Activated T-helper 1 cell treated with anti-CD3 and anti-CD28 coated beads, Interleukin-12 subunit alpha, Interleukin-12 subunit beta, Interleukin-2, Interleukin-4 antibody, amounts not matched to agents 30 ng/mL and 10 ng/mL and 1 ng/mL, durations not matched to agents 14 hours and 24 hours and 36 hours (primary cell): ENCODE measurements at regions of chr7 and their contacts with region 1.

Region 1: DNA sequence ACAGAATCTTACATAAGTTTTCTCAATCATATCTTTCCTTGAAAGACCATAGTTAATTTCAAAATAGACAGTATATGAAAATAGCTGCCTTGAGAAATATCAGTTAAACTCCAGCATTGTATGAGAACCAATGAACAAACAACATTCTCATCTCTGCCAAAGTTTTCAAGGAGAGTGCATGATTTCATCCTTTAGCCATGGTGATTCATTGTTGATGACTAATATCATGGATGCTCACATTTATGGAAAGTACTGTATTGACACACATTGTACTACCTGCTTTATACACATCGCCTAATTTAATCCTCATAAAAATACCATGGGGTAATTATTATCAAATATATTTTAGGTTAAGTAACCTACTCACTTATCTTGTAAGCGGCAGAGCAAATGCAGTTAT is 250.3 kb downstream of the CNTNAP2 start:
- DNase-seq: no peak
- H3K4me3 Mint-ChIP-seq: no peak overlapping the region
- H3K27ac Mint-ChIP-seq: no peak overlapping the region
- H3K4me1 Mint-ChIP-seq: no peaks in the 10 kb centered on the region
- H3K27me3 Mint-ChIP-seq: no peaks in the 10 kb centered on the region

Region 2: GRCh38 chr7:145263886-145264285 is 1103.1 kb before region 1 on chr7:
- intact Hi-C with region 1: loop called (anchors 10 kb)
- DNase-seq: no peak
- H3K4me3 Mint-ChIP-seq: no peak overlapping the region
- H3K27ac Mint-ChIP-seq: no peak overlapping the region
- H3K4me1 Mint-ChIP-seq: no peaks in the 10 kb centered on the region
- H3K27me3 Mint-ChIP-seq: no peaks in the 10 kb centered on the region

Region 3: GRCh38 chr7:146528581-146528980 is 161.6 kb after region 1 on chr7:
- intact Hi-C with region 1: no loop called
- DNase-seq: no peak
- H3K4me3 Mint-ChIP-seq: no peak overlapping the region
- H3K27ac Mint-ChIP-seq: no peak overlapping the region
- H3K4me1 Mint-ChIP-seq: no peaks in the 10 kb centered on the region
- H3K27me3 Mint-ChIP-seq: no peaks in the 10 kb centered on the region